ENCODE measurements at regions of chr2 and their contacts with region 1.

Region 1: DNA sequence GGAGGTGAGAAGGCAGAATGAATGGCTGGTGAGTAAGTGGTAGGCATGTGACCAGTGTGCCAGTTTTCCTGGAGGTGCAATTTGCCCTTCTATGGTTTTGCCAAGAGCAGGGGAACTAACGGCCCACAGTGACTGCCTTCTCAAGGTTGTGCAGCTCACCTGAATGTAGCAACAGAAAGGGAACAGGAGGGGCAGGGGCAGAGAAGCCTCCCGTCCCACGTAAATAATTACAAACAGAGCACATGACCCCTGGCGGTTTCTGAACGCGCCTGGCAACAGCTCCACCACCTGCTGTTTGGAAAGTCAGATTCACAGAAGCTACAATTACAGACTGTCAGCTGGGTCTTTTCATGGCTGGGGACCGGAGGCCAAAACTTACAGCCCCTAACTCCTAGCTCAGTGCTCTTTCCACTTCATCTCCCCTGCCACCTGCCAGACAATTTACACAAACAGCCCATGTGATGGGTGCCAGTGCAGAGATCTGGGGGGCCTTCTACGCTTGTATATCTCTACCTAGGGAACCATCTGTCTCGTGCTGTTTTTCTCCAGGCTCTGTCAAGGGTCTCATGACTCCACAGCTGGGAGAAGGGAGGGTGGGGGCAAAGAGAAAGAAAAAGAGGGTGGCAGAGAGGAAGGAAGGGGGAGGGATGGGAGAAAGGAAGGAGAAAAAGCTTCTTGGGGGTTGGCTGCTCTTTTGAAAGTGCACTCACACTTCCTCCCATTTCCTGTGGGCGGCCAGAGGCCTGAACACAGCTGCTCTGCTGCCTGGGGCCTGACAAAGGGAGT is 69.6 kb downstream of the POLR1A start:
- DNase-seq: peak; percentile 66
- ATAC-seq: peak; percentile 40
- H3K4me3 Mint-ChIP-seq: peak overlapping the region; percentile 79
- H3K27ac Mint-ChIP-seq: peak overlapping the region; percentile 99
- H3K4me1 Mint-ChIP-seq: peaks cover 67% of the 10 kb centered on the region
- H3K27me3 Mint-ChIP-seq: no peaks in the 10 kb centered on the region

Region 2: DNA sequence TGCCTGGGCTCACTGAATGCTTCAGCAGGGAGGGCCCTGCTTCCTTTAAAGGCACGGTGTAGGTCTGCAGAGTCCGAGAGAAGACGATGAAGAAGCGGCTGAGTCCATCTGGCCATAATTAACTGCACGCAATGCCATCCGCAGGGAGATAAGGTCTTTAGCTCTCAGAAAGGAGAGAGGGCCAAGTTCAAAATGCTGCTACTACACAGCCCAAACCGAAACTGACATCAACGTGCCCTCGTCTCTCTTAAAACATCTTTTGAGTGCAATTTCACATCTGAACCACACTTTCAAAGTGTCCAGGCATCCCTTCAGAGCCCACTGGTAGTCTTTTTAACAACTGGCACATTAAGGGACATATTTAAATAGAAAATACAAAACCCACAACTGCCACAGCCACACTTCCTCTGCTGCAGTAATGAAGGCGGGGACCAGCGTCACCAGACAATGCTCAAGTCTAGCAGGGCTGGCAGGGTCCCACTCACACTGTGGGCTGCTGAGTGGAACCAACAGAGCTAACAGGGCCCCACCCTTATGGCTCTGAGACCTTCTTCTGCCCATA is 183.1 kb before region 1 on chr2:
- POLR2A ChIA-PET with region 1: interaction called, 10 read pairs
- DNase-seq: peak; percentile 67
- ATAC-seq: peak; percentile 88
- H3K4me3 Mint-ChIP-seq: peak overlapping the region; percentile 85
- H3K27ac Mint-ChIP-seq: peak overlapping the region; percentile 99
- H3K4me1 Mint-ChIP-seq: peaks cover 59% of the 10 kb centered on the region
- H3K27me3 Mint-ChIP-seq: no peaks in the 10 kb centered on the region

Region 3: DNA sequence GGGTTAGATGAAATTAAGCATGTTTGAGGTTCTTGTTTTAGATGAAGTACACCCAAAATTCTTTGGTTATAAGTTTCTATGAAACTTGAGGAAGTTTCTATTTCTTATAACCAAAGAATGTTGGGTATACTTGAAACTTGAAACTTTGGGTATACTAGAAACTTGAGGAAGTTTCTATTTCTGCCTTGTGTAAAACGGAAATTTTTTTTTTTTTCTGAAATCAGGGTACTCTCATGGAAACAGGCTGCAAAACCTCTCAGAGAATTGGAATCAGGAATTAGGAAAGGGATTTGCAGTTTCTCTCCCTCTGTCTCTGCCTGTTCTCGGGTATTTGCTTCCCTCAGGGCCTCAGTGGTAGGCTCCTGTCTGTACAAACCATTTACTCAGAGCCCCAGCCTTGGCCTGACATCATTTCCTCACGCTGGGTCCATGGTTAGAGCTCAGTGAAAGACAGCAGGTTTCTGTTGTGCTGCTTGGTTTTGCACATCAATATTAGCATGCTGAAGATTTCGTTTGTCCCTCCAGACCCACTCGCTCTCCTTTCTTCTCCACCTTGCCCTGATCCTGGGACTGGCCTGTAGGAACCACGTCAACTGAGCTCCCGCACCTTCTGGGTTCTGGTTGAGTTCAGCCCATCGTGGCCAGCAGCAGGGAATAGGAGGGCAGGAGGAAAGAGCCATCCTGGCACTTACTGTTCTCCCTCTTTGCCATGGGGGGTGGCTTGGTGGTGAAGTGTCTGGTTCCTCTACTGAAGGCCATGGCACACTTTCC is 36.8 kb before region 1 on chr2:
- POLR2A ChIA-PET with region 1: interaction called, 70 read pairs
- DNase-seq: peak; percentile 58
- ATAC-seq: peak; percentile 89
- H3K4me3 Mint-ChIP-seq: peak overlapping the region; percentile 74
- H3K27ac Mint-ChIP-seq: peak overlapping the region; percentile 99
- H3K4me1 Mint-ChIP-seq: peaks cover 70% of the 10 kb centered on the region
- H3K27me3 Mint-ChIP-seq: no peaks in the 10 kb centered on the region